Activated CD8-positive, alpha-beta T cell treated with anti-CD3 and anti-CD28 coated beads for 36 hours (primary cell): ENCODE measurements at regions of chr10 and their contacts with region 1.

Region 1: DNA sequence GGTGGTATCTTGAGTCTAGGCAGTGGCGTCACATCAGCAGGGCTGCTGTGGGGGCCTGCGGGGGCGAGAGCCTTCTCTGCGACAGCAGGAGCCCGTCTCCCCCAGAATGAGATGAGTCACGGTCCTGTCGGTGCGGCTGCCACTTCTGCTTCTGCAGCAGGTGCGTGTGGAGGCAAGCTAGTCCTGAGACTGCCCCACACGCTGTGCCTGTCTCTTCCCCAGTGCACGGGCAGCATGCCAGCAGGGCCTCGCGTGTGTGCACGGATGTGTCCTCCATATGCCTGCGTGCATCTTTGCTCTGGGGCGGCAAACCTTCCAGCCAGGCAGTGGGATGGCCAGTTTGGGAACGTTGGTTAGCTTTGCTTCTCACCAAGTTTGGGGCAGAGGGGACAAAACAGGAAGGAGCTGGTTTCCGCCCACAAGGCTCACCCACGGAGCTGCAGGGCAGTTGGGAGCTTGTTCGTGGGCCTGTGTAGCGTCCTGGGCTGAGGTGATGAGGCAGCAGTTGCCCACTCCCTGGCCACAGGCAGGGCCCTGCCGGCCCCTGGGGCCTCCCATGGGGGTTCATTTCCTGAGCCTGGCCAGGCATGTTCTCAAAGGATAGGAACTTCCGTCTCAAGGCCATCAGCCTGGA is 60.8 kb upstream of the PPIF start:
- DNase-seq: peak; percentile 96
- ATAC-seq: peak; percentile 91
- H3K4me3 Mint-ChIP-seq: peak overlapping the region; percentile 61
- H3K27ac Mint-ChIP-seq: peak overlapping the region; percentile 88
- H3K4me1 Mint-ChIP-seq: peaks cover 46% of the 10 kb centered on the region
- H3K27me3 Mint-ChIP-seq: no peaks in the 10 kb centered on the region
- CTCF ChIP-seq: no peak

Region 2: DNA sequence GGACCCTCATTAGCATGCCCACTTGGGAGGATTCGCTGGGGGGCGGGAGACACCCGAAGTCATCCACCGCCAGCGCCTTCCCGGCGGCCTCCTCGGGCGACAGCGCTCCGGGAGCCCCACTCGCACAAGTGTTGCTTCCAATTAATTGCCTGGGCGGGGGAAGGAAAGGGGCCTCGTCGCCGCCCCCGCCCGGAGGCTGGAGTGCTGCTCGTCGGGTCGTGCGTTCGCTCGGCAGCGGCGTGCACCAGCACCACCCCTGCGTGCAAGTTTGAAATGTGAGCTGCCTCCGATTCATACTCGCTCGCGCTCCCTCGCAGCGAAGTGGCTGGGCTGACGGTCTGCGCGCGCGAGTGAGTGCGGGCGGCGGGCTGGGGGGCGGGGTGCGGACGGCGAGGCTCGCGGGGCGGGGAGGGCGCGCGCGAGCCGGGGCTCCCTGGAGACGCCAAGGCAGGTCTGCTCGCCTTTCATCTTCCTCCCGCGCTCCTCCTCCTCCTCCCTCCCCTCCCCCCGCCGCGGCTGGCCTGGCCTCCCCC is 43.7 kb before region 1 on chr10:
- CTCF ChIA-PET with region 1: interaction called, 3 read pairs
- POLR2A ChIA-PET with region 1: interaction called, 12 read pairs
- intact Hi-C with region 1: loop called (anchors 5 kb)
- DNase-seq: peak; percentile 82
- ATAC-seq: peak; percentile 49
- H3K4me3 Mint-ChIP-seq: peak overlapping the region; percentile 78
- H3K27ac Mint-ChIP-seq: peak overlapping the region; percentile 88
- H3K4me1 Mint-ChIP-seq: peaks cover 59% of the 10 kb centered on the region
- H3K27me3 Mint-ChIP-seq: no peaks in the 10 kb centered on the region
- CTCF ChIP-seq: no peak

Region 3: GRCh38 chr10:79249186-79250121 is 37.0 kb before region 1 on chr10:
- CTCF ChIA-PET with region 1: interaction called, 3 read pairs
- POLR2A ChIA-PET with region 1: interaction called, 12 read pairs
- intact Hi-C with region 1: loop called (anchors 5 kb)
- DNase-seq: peak; percentile 55
- ATAC-seq: peak; percentile 73
- H3K4me3 Mint-ChIP-seq: peak overlapping the region; percentile 31
- H3K27ac Mint-ChIP-seq: peak overlapping the region; percentile 89
- H3K4me1 Mint-ChIP-seq: peaks cover 68% of the 10 kb centered on the region
- H3K27me3 Mint-ChIP-seq: no peaks in the 10 kb centered on the region
- CTCF ChIP-seq: no peak